ENCODE measurements at regions of chr3 and their contacts with region 1.

Region 1: GRCh38 chr3:123489400-123490004 is 40.6 kb upstream of the ADCY5 start:
- DNase-seq: peak; percentile 32 to 71
- ATAC-seq: peak; percentile 91

Region 2: DNA sequence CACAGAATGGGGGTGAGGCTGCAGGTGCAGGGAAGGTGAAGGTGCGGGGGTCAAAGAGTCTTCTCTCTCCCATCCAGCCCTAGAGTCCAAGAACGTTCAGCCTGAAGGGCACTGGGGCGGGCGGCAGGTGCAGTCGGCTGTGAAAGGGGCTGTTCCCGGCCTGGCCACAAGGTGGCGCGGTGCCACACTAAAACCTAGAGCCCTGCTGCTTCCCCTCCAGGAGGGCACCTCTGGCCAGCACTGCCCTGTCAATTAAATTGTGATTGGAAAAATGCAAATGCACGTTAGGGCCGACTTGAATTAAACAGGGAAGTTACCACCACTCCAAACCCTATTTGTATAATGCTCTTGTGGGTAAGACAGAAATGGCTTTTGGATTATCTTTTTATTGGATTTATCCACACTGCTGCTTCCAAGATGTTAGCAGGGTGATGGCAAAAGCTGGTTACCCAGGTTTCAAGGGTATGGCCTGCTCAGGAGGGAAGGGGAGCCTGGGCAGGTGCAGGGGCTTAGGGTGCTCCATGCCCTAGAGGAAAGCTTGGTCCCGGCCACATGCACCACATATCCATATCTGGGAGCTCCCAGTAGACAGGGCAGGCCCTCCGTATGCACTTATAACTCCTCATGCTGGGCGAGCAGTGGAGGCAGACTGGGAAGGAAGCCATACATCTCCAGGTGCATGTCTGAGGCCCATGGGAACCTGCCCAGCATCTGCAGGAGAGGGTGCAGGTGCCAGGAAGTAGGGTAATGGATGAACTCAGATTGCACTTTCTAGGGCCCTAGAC is 160.5 kb before region 1 on chr3:
- intact Hi-C with region 1: loop called (anchors 2 to 5 kb)
- DNase-seq: peak; percentile 59 to 87
- ATAC-seq: peak; percentile 92

Measured in left colon (tissue), 2 donors.